Caco-2 (cell line): ENCODE measurements at regions of chr2 and their contacts with region 1.

Region 1: GRCh38 chr2:26469092-26469710 is 8.7 kb downstream of the OTOF start:
- DNase-seq: peak; percentile 78 to 82
- H3K4me3 ChIP-seq: no peak overlapping the region
- H3K4me3 Mint-ChIP-seq: no peak overlapping the region
- H3K27ac Mint-ChIP-seq: no peak overlapping the region
- H3K4me1 ChIP-seq: peaks cover 6% of the 10 kb centered on the region
- H3K4me1 Mint-ChIP-seq: no peaks in the 10 kb centered on the region
- H3K27me3 ChIP-seq: no peaks in the 10 kb centered on the region
- H3K27me3 Mint-ChIP-seq: no peaks in the 10 kb centered on the region
- CTCF ChIP-seq: peak; percentile 85 to 96

Region 2: GRCh38 chr2:26395394-26395793 is 73.8 kb before region 1 on chr2:
- CTCF ChIA-PET with region 1: interaction called, 5 read pairs
- POLR2A ChIA-PET with region 1: no interaction called
- intact Hi-C with region 1: loop called (anchors 2 kb)
- DNase-seq: peak in 1 of 2 experiments; percentile 21
- H3K4me3 ChIP-seq: no peak overlapping the region
- H3K4me3 Mint-ChIP-seq: no peak overlapping the region
- H3K27ac Mint-ChIP-seq: no peak overlapping the region
- H3K4me1 ChIP-seq: no peaks in the 10 kb centered on the region
- H3K4me1 Mint-ChIP-seq: no peaks in the 10 kb centered on the region
- H3K27me3 ChIP-seq: no peaks in the 10 kb centered on the region
- H3K27me3 Mint-ChIP-seq: no peaks in the 10 kb centered on the region
- CTCF ChIP-seq: peak in 1 of 2 experiments; percentile 37

Region 3: DNA sequence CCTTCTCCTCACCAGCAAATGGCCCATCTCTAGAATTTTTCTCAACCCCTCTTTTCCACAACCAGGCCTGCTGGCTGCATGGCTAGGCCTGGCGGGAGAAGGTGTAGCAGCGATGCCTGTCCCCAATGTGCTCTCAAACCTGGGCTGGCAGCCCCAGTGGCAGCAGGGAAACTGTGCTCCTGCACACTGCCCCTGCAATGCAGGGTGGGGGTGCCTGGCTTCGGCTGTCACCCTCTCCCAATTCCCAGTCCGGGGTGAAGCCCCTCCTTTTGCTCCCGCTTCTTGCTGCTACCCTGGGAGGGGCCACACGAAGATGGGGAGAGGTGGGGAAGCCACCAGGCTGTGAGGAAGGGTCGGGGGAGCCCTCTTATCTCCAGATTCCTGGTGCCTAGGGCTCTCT is 44.8 kb after region 1 on chr2:
- CTCF ChIA-PET with region 1: no interaction called
- POLR2A ChIA-PET with region 1: no interaction called
- intact Hi-C with region 1: no loop called
- DNase-seq: no peak
- H3K4me3 ChIP-seq: no peak overlapping the region
- H3K4me3 Mint-ChIP-seq: no peak overlapping the region
- H3K27ac Mint-ChIP-seq: no peak overlapping the region
- H3K4me1 ChIP-seq: no peaks in the 10 kb centered on the region
- H3K4me1 Mint-ChIP-seq: no peaks in the 10 kb centered on the region
- H3K27me3 ChIP-seq: no peaks in the 10 kb centered on the region; the same call in none of the 2 replicates
- H3K27me3 Mint-ChIP-seq: peaks cover 4% of the 10 kb centered on the region
- CTCF ChIP-seq: no peak